GM10248 (cell line): ENCODE measurements at regions of chr6 and their contacts with region 1.

Region 1: DNA sequence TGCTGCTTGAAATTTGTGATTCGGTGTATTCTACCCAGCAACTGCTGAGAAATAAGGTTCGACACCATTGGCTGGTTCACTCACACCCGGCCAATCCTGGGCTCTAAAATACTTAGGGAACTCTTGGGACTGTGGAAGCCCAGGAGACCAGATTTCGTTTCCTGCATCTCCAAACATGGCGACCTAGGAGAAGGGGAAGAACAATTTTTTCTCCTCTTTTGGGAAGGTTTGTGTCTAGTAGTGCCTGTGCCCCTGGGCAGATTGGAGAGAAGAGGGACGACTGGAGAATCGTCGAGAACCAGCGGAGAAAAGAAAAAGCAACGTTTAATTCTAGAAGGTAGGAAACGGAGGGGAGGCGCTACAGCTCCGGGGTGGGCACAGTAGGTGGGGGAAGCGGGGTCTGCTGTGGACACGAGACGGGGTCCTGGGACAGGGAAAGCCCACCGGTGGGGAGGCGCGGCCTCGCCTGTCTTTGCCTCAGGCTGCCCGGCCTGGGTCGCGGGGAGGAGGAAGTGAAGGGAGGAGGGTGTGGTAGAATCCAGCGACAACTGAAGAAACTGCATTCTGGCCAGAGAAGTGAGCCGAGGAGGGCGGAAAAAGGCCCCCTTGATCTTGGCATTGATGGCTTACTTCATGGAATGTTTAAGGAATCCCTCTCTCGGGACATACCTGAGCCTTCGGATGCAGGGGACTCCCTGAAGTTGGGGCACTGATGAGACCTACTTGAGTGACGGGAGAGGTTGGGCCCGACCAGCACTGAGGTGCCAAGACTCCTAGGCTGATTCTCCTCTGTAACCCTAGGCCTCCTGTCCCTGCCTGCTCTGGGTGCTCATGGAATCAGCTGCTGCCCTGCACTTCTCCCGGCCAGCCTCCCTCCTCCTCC is at the start of gene BTN2A1:
- DNase-seq: peak; percentile 87
- CTCF ChIP-seq: no peak

Region 2: DNA sequence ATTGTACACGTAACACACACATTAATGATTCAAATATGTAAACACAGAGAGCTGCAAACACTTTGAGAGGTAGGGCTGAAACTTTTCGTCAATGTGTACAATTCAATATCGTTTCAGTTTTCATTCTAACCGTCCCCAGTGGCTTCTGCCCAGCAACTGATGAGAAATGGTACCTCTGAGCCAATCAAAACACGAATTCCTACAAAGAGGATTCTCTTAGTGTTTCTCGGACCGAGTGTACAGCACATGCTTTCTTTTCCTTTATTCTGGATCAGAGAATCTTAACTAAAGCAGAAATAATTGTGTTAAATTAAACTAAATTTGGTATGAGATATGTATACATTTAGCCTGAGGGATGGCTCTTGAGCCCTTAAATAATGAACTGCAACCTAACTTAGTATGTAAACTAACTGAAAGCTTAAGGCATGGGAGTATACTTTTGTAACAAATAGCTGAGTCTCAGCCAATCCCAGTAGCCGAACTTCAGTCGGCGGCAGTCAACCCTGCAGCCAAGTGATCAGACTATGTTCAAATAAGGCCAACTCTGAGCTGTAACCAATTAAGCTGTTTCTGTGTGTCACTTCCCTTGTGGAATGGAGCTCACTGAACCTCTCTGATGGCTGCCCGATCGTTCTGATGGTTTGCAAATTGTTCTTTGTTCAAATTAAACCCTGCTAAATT is 15.9 kb after region 1 on chr6:
- CTCF ChIA-PET with region 1: interaction called, 11 read pairs
- POLR2A ChIA-PET with region 1: no interaction called
- DNase-seq: peak; percentile 81
- CTCF ChIP-seq: no peak

Region 3: GRCh38 chr6:26568601-26569432 is 110.8 kb after region 1 on chr6:
- CTCF ChIA-PET with region 1: no interaction called
- POLR2A ChIA-PET with region 1: no interaction called
- DNase-seq: peak; percentile 82
- CTCF ChIP-seq: peak; percentile 38